ENCODE measurements at regions of chr16 and their contacts with region 1.

Region 1: DNA sequence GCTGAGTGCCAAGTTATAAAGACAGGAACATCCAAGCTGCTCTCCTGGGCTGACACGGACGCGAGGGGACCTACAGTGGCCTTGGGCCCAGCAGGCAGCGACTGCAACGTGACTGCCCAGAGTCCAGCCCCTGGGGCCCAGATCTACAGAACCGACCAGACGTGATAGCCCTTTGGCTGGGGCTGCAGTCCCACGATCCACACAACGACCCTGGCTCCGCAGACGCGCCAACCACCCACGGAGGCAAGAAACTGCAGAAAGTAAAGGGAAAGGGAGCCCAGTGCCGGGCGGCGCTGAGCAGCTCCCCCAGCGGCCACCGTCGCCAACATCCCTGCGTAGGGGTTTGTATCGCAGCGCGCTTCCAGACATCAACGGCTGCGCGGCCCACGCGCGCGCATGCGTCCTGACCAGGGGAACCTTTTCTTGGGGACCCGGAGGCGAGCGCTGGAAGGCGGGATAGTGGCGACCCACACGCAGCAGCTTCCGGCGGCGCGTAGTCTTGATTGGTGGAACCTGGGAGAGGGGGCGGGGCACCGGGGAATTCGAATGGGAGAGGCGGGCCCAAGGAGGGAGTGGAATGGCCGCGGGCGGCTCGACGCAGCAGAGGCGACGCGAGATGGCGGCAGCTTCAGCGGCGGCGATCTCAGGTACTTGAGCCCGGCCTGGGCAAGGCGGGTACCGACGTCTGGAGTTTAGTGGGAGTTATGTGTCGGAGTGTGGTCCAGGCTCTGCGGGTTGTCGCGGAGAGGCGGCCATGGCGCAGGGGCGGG is at the start of gene KIF22:
- DNase-seq: peak; percentile 100
- ATAC-seq: peak; percentile 95
- H3K4me3 Mint-ChIP-seq: peak within 1 kb of the TSS; percentile 91
- H3K27ac Mint-ChIP-seq: peak within 1 kb of the TSS; percentile 97
- H3K4me1 Mint-ChIP-seq: peaks cover 30% of the 10 kb centered on the region
- H3K27me3 Mint-ChIP-seq: no peaks in the 10 kb centered on the region
- total RNA-seq, gene KIF22: 153 to 168 TPM

Region 2: DNA sequence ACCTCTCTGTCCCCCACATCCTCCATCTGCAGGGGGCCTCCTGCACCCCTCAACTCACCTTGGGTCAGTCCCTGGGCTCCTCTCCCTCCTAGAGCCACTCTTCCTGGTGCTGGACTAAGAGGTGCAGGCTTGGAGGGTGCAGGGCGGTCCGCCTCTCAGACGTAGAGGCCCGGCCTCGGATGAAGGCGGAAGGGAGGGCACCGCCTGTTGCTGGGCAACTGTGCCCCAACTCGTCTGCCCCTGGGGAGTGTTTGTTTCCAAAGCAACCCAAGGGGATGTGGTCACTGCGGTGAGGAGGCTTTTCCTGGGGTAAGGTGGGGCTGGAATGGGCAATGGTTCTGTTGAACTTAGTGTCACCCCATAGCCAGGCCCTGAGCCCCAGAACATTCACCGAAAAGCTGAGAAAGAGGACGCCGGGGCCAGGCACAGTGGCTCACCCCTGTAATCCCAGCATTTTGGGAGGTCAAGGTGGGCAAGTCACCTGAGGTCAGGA is 44.5 kb before region 1 on chr16 and contains the start of gene C16orf54:
- CTCF ChIA-PET with region 1: interaction called, 16 read pairs
- POLR2A ChIA-PET with region 1: interaction called, 4 read pairs
- intact Hi-C with region 1: loop called (anchors 1 kb)
- DNase-seq: peak; percentile 93
- ATAC-seq: peak; percentile 78
- H3K4me3 Mint-ChIP-seq: peak within 1 kb of the TSS; percentile 97
- H3K27ac Mint-ChIP-seq: peak within 1 kb of the TSS; percentile 97
- H3K4me1 Mint-ChIP-seq: peaks cover 59% of the 10 kb centered on the region
- H3K27me3 Mint-ChIP-seq: no peaks in the 10 kb centered on the region
- total RNA-seq, gene C16orf54: 21.3 to 22.0 TPM

Region 3: GRCh38 chr16:29815793-29816693 is 25.7 kb after region 1 on chr16 and contains the start of gene PAGR1:
- CTCF ChIA-PET with region 1: interaction called, 6 read pairs
- POLR2A ChIA-PET with region 1: interaction called, 4 read pairs
- intact Hi-C with region 1: loop called (anchors 1 kb)
- DNase-seq: peak; percentile 99
- ATAC-seq: peak; percentile 72
- H3K4me3 Mint-ChIP-seq: peak within 1 kb of the TSS; percentile 84
- H3K27ac Mint-ChIP-seq: peak within 1 kb of the TSS; percentile 97
- H3K4me1 Mint-ChIP-seq: peaks cover 57% of the 10 kb centered on the region
- H3K27me3 Mint-ChIP-seq: no peaks in the 10 kb centered on the region
- total RNA-seq, gene PAGR1: 20.6 to 25.6 TPM

Region 4: GRCh38 chr16:29873319-29873718 is 83.0 kb after region 1 on chr16:
- CTCF ChIA-PET with region 1: no interaction called
- POLR2A ChIA-PET with region 1: no interaction called
- intact Hi-C with region 1: no loop called
- DNase-seq: no peak
- ATAC-seq: no peak
- H3K4me3 Mint-ChIP-seq: no peak overlapping the region
- H3K27ac Mint-ChIP-seq: no peak overlapping the region
- H3K4me1 Mint-ChIP-seq: peaks cover 7% of the 10 kb centered on the region
- H3K27me3 Mint-ChIP-seq: peaks cover 20% of the 10 kb centered on the region

Region 5: DNA sequence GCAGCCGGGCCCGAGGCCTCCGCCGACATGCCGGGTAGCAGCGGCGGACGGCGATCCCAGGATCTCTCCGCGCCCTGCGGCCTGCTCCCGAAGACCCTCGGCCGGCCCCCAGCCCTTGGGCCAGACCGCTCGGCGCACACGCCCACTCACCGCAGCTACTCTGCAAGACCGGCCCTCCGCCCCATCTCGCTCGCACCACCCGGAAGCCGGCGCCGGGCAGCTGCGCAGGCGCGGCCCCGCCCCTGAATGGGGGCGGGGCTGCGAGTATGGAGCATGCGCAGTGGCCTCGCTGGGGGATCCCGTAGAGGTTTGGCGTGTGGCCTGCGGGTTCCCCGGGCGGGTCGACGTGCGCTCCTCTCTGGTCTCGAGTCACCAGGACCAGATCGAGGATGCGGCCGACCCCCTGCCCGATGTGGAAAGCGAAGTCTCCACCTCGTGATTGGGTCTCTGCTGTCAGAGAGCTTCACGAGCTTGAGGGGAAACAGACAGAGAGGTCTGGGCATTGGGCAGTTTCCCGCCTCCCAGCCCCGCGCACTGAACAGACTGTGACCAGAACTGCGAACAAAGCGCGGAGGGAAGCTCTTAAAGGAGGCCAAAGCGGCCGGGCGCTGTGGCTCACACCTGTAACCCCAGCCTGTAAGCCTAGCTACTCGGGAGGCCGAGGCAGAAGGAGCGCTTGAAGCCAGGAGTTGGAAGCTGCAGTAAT is 135.8 kb after region 1 on chr16 and contains the start of gene KCTD13:
- CTCF ChIA-PET with region 1: interaction called, 7 read pairs
- POLR2A ChIA-PET with region 1: no interaction called
- intact Hi-C with region 1: loop called in 1 of 2 experiments (anchors 1 kb)
- DNase-seq: peak; percentile 92
- ATAC-seq: peak; percentile 90
- H3K4me3 Mint-ChIP-seq: peak within 1 kb of the TSS; percentile 82
- H3K27ac Mint-ChIP-seq: peak within 1 kb of the TSS; percentile 95
- H3K4me1 Mint-ChIP-seq: peaks cover 32% of the 10 kb centered on the region
- H3K27me3 Mint-ChIP-seq: no peaks in the 10 kb centered on the region
- total RNA-seq, gene KCTD13: 30.4 to 33.4 TPM

Region 6: DNA sequence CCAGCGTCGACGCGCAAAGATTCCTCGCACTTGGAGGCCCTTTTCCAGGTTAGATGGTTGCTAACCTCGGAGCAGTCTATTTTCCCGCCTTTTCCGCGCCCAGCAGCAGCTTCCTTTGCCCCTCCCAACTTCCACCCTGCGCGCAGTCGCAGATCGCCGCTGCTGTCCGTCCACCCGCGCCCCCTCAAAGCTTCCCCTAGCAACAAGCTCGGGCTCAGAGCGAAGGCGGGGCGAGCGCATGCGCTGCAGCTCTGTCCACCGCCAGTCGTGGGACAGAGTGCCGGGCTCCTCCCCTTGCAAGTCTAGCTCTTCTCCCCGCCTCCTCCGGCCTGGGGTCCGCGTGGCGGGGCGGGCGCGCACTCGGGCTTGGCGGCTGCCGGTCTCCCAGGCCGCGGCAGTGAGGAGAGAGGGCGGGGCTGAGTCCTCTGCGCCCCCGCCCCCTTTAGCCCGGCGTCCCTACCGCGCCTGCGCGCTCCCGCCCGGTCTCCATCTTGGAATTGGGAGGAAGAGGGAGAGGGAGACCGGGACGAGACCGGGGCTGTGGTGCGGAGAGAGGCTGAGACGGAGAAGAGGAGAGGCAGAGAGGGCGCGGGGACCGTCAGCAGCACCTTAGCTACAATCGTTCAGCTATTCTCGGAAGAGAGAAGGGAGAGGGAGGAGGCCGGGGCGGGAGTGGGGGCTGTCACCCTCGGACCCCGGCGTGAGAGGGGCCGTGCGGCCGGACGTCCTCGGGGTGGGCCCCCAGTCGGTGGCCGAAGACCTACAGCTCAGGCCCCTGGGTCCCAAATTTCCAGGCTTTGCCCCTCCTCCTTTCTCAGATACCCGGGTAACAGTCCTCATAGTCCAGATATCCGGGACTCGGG is 183.2 kb after region 1 on chr16 and contains the start of gene TAOK2:
- CTCF ChIA-PET with region 1: interaction called, 5 read pairs
- POLR2A ChIA-PET with region 1: no interaction called
- intact Hi-C with region 1: loop called in 1 of 2 experiments (anchors 1 kb)
- DNase-seq: peak; percentile 98
- ATAC-seq: peak; percentile 98
- H3K4me3 Mint-ChIP-seq: peak within 1 kb of the TSS; percentile 87
- H3K27ac Mint-ChIP-seq: peak within 1 kb of the TSS; percentile 86
- H3K4me1 Mint-ChIP-seq: peaks cover 31% of the 10 kb centered on the region
- H3K27me3 Mint-ChIP-seq: no peaks in the 10 kb centered on the region
- total RNA-seq, gene TAOK2: 24.1 to 24.4 TPM

Region 7: GRCh38 chr16:30052671-30053372 is 262.5 kb after region 1 on chr16:
- CTCF ChIA-PET with region 1: interaction called, 3 read pairs
- POLR2A ChIA-PET with region 1: no interaction called
- intact Hi-C with region 1: loop called in 1 of 2 experiments (anchors 1 kb)
- DNase-seq: peak; percentile 95
- ATAC-seq: peak; percentile 69
- H3K4me3 Mint-ChIP-seq: peak overlapping the region; percentile 78
- H3K27ac Mint-ChIP-seq: peak overlapping the region; percentile 72
- H3K4me1 Mint-ChIP-seq: peaks cover 25% of the 10 kb centered on the region
- H3K27me3 Mint-ChIP-seq: peaks cover 2% of the 10 kb centered on the region